ENCODE measurements at regions of chr7 and their contacts with region 1.

Region 1: DNA sequence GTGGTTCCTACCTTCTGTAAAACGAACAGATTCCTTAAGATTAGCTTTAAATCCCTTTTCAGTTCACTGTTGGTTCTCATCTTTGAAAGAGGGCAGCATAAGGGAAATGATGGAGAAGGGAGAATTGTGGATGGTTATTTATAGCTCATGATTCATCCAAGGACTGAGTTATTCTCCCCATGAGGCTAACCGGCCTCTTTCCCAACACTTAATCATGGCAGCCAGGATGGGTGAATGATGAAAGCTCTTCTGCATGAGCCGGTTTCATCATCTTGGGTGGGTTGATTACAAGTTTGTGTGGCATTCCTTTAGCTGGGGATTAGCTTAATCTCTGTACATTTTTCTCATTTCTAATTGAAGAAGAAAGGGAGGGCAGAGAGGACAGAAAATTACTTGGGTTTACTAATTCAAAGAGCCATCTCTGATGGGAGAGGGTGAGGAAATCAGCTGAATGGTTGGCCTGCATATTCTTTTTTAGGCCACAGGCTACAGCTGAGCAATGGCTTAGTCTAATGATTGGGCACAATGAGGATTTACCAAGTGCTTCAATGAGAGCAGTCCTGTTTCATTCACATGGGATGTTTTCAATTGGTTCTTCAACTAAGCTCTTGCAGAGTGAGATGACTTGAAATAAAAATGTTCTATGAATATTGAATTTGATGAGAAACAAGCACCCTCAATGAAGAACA is 250.0 kb downstream of the BMPER start:
- DNase-seq: peak; percentile 98
- H3K4me3 ChIP-seq: no peak overlapping the region
- CTCF ChIP-seq: no peak

Region 2: DNA sequence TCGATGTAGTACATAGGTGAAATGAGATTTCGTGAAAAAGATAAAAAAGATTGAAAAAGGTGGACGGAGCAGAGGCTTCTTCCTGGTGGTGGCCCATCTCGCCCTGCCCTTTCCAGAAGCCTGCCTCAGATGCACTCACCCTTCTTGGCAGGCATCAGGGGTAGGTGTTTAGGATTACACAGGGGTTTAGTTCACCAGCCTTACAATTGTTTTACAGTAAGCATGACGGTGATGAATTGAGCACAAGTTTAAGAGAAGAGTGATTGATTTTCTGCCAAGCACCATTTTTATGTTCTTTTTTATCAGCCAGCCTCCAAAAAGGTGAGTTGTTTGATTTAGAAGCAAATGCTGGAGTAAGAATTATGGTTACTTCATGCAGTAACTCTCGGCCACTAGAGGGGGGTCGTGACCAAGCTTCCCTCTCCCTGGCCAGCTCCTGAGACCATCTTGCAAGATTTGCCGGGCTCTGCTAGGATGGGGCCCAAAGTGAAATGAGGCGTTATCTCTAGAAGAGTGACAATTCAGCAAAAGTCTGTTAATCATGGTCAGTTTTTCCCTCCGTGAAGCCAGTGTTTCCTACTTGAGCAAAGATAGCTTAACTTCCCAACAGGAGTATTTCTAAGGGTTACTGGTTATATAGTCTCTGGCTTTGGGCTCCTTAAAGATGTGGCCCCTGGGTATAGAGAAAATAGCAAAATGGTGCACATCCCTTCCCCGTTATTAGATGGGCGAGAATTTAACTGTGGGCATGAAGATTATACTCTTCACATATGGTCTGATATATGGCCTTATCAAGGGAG is 21.2 kb before region 1 on chr7:
- CTCF ChIA-PET with region 1: interaction called, 104 read pairs
- POLR2A ChIA-PET with region 1: interaction called, 3 read pairs
- DNase-seq: no peak
- H3K4me3 ChIP-seq: no peak overlapping the region
- CTCF ChIP-seq: peak; percentile 76

Region 3: DNA sequence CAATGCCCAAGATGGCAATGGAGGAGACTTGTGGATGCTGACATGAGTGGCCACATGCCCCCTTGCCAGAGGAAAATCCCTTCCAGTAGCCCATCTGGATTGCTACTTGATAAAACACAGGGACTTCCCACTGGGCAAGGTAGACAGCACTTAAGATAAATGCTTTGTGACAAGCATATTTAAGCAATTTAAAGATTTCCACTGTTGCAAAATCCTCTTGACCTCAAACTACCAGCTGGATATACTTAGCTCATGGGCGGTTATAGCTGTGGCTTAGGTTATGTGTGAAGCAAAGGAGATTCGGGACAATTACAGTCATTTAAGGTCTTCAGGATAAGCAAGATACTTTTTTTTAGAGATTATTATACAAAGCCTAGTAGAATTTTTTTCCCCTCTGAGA is 12.0 kb before region 1 on chr7:
- CTCF ChIA-PET with region 1: interaction called, 13 read pairs
- POLR2A ChIA-PET with region 1: interaction called, 4 read pairs
- DNase-seq: peak; percentile 75
- H3K4me3 ChIP-seq: no peak overlapping the region
- CTCF ChIP-seq: no peak